HEK293 (cell line): ENCODE measurements at regions of chr21 and their contacts with region 1.

Region 1: DNA sequence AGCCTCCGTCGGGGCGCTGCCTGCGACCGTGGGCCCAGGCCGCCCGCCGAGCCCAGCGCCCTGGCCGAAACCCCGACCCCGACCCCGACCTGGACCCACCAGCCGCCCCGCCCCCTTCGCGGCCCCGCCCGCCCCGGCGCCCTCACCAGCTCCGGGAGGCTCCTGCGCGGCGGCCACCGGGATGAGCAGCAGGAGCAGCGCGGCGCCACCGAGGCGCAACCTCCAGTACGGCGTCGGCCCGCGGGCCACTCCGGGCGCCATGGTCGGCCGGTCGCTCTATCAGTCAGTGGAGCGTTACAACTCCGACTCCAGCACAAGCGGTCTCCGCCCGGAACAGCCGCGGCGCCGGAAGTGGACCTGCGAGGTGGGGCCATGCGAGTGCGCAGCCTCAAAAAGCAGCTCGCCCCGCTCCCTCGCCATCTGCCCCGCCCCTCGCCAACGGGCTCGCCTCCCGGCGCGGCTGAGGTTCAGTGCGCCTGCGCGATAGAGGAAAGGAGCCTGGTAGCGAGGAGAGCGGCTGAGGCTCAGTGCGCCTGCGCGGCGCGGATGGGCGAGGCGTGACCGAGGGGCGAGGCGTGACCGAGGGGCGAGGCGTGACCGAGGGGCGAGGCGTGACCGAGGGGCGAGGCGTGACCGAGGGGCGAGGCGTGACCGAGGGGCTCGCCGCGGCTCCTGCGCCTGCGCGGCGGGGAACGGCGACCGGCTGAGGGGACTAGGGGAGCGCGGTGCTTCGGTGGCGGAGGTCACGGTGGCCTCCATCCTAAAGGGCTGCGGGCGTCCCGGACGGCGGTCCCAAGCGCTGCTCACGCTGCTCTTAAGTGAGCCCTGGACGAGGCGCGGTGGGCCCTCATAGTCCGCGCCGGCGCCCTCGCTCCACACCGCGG is at the start of gene PTTG1IP:
- H3K4me3 ChIP-seq: peak within 1 kb of the TSS; percentile 79
- H3K27ac ChIP-seq: peak within 1 kb of the TSS; percentile 65
- H3K4me1 ChIP-seq: peaks cover 28% of the 10 kb centered on the region
- CTCF ChIP-seq: no peak

Region 2: DNA sequence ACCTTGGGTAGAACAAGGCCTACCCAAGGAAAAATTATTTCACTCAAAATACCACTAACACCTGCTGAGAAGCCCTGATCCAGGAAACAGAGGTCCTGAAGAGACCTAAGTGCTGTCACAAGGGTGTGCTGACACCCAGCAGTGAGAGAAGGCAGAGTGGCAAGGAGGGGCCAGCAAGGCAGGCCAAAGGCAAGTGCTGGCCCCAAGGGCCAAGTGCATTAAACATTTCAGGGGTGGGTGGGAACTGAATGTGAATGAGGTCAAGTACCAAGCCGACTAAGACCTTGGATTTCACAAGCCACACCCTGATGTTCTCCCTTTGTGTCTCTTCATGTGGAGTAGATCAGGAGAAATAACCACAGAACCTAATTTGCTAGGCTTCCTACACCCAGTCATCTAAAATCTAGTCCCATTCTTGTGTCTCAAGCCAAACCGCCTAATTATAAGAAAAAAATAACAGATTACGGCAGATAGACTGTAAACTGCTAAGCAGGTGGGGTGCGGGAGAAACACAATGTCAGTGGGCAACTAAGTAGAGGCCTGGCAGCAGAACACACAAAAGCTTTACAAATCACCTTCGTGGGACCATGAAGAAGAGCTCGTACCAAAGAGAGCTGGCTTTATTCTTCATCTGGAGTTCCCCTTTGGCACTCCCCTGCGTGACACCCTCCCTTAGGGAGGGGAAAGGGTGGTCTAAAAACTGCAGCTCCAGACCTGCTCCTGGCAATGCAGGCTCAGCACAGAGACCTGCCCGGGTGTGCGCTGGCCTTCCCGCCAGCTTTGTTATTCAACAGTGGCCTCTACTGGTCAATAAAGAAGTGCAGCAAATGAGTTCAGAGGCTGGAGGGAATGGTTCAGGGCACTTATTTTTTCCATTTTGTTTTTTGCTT is 80.7 kb before region 1 on chr21:
- CTCF ChIA-PET with region 1: interaction called, 4 read pairs
- POLR2A ChIA-PET with region 1: interaction called, 11 read pairs
- H3K4me3 ChIP-seq: no peak overlapping the region
- H3K27ac ChIP-seq: no peak overlapping the region
- H3K4me1 ChIP-seq: no peaks in the 10 kb centered on the region
- CTCF ChIP-seq: peak; percentile 44

Region 3: GRCh38 chr21:44817506-44817880 is 56.1 kb before region 1 on chr21:
- CTCF ChIA-PET with region 1: no interaction called
- POLR2A ChIA-PET with region 1: interaction called, 19 read pairs
- H3K4me3 ChIP-seq: peak overlapping the region; percentile 55
- H3K27ac ChIP-seq: peak overlapping the region; percentile 76; the same call in 1 of the 2 replicates
- H3K4me1 ChIP-seq: no peaks in the 10 kb centered on the region
- CTCF ChIP-seq: no peak